IMR-90 (cell line): ENCODE measurements at regions of chr1 and their contacts with region 1.

Region 1: GRCh38 chr1:184805667-184806295 is 51.1 kb upstream of the EDEM3 start:
- DNase-seq: peak; percentile 83
- ATAC-seq: peak; percentile 89
- H3K4me3 ChIP-seq: no peak overlapping the region
- H3K27ac ChIP-seq: no peak overlapping the region
- H3K4me1 ChIP-seq: peaks cover 7% of the 10 kb centered on the region
- H3K27me3 ChIP-seq: no peaks in the 10 kb centered on the region
- CTCF ChIP-seq: peak; percentile 96
- POLR2A ChIP-seq: 0 out of 2 replicates have a peak, but pooled peaks have one; percentile 50
- RAD21 ChIP-seq: peak; percentile 99

Region 2: GRCh38 chr1:184818646-184819045 is 12.9 kb after region 1 on chr1:
- CTCF ChIA-PET with region 1: no interaction called
- POLR2A ChIA-PET with region 1: no interaction called
- dilution Hi-C with region 1: no loop called
- in situ Hi-C with region 1: no loop called
- intact Hi-C with region 1: no loop called
- DNase-seq: no peak
- ATAC-seq: no peak
- H3K4me3 ChIP-seq: no peak overlapping the region
- H3K27ac ChIP-seq: no peak overlapping the region
- H3K4me1 ChIP-seq: peaks cover 4% of the 10 kb centered on the region; the same call in 1 of the 2 replicates
- H3K27me3 ChIP-seq: no peaks in the 10 kb centered on the region
- CTCF ChIP-seq: no peak
- POLR2A ChIP-seq: no peak
- RAD21 ChIP-seq: no peak

Region 3: DNA sequence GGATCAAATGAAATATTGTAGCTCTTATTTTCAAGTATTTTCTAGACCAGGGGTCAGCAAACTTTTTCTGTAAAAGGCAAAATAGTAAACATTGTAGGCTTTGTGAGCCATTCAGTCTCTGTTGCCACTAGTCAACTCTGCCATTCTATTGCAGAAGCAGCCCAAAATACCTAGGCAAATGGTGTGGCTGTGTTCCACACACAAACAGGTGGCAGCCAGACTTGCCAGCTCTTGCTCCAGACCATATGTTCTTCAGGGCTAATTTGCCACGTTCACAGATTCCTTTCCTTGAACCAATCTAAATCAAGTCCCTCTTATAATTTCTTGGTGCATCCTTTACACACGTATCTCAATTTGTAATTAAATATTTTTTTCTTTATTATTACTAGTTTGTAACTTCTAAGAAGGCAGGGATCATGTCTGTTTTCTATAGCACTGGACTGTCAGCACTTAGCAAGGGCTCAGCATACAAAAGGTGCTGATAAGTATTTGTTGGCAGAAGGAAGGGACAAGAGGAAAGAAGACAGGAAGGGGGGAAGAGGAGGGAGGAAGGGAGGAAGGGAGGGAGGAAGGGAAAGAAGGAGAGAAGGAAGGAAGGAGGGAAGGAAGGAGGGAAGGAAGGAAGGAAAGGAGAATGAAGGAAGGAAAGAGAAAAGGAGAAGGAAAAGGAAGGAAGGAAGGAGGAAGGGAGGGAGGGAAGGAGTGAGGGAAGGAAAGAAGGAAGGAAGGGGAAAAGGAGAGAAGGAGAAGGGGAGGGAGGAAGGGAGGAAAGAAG is 55.4 kb after region 1 on chr1:
- CTCF ChIA-PET with region 1: no interaction called
- POLR2A ChIA-PET with region 1: no interaction called
- dilution Hi-C with region 1: no loop called
- in situ Hi-C with region 1: no loop called
- intact Hi-C with region 1: no loop called
- DNase-seq: no peak
- ATAC-seq: no peak
- H3K4me3 ChIP-seq: no peak overlapping the region
- H3K27ac ChIP-seq: no peak overlapping the region
- H3K4me1 ChIP-seq: no peaks in the 10 kb centered on the region
- H3K27me3 ChIP-seq: no peaks in the 10 kb centered on the region
- CTCF ChIP-seq: no peak
- POLR2A ChIP-seq: no peak
- RAD21 ChIP-seq: no peak

Region 4: GRCh38 chr1:185681034-185681633 is 875.4 kb after region 1 on chr1:
- CTCF ChIA-PET with region 1: no interaction called
- POLR2A ChIA-PET with region 1: no interaction called
- dilution Hi-C with region 1: no loop called
- in situ Hi-C with region 1: loop called (anchors 25 kb)
- intact Hi-C with region 1: loop called (anchors 10 kb)
- DNase-seq: peak; percentile 44
- ATAC-seq: peak; percentile 71
- H3K4me3 ChIP-seq: no peak overlapping the region
- H3K27ac ChIP-seq: no peak overlapping the region
- H3K4me1 ChIP-seq: no peaks in the 10 kb centered on the region
- H3K27me3 ChIP-seq: no peaks in the 10 kb centered on the region
- CTCF ChIP-seq: peak; percentile 67
- POLR2A ChIP-seq: no peak
- RAD21 ChIP-seq: peak; percentile 67